GM12878 (cell line): ENCODE measurements at regions of chr5 and their contacts with region 1.

Region 1: DNA sequence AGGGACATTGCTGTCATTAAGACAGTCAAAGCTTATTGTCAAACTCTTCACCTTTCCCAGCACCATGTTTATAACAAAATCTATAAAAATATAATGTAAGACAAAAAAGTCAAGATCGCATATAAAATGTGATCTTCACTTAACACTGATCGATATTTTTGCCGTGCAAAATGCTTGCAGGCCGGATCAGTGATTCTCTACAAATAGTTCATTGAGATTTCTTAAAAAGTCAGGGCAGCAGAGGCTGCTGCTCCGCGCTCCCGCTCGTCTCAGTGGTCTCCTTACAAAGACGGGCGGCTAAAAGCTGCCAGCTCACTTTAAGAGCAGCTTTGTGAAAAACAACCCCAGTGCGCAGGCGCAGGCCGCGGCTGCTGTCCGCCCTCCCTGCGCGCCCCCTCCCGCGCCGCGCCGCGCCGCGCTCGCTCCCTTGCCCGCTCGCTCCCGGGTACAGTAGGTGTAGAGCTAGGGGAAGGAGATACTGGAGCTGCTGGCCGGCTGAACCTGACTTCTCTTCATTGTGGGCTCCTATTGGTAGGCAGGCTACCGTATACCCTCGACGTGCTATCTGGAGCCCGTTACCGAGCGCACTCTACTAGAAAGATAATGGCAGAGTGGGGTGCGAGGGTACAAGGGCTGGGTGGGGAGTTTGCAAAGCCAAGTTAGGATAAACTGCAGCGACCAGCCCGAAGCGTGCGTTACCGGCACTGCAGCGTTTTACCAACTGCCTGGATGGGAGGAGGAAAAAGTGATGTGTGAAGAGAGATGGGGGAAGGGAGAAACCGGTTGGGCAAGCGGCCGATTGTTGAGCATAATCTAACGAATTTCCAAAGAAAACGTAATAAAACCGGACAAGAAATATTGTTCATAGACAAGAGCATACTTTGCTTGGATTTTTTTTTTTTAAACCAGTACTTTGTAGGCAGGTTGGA is at the start of gene ARRDC3:
- DNase-seq: peak; percentile 82
- ATAC-seq: peak; percentile 69
- H3K4me3 ChIP-seq: peak within 1 kb of the TSS; percentile 95
- H3K27ac ChIP-seq: peak within 1 kb of the TSS; percentile 100
- H3K4me1 ChIP-seq: peaks cover 8% of the 10 kb centered on the region; the same call in 1 of the 2 replicates
- H3K27me3 ChIP-seq: no peaks in the 10 kb centered on the region
- CTCF ChIP-seq: no peak
- EP300 ChIP-seq: no peak
- POLR2A ChIP-seq: peak; percentile 98
- RAD21 ChIP-seq: no peak
- polyA plus RNA-seq, gene ARRDC3: 2.3 to 7.0 TPM

Region 2: GRCh38 chr5:89534331-89534730 is 1849.0 kb before region 1 on chr5:
- CTCF ChIA-PET with region 1: no interaction called
- POLR2A ChIA-PET with region 1: no interaction called
- RAD21 ChIA-PET with region 1: no interaction called
- SMC1A ChIA-PET with region 1: no interaction called
- in situ Hi-C with region 1: no loop called
- intact Hi-C with region 1: no loop called
- DNase-seq: no peak
- ATAC-seq: no peak
- H3K4me3 ChIP-seq: no peak overlapping the region
- H3K27ac ChIP-seq: no peak overlapping the region
- H3K4me1 ChIP-seq: no peaks in the 10 kb centered on the region
- H3K27me3 ChIP-seq: no peaks in the 10 kb centered on the region
- CTCF ChIP-seq: no peak
- EP300 ChIP-seq: no peak
- POLR2A ChIP-seq: no peak
- RAD21 ChIP-seq: no peak

Region 3: DNA sequence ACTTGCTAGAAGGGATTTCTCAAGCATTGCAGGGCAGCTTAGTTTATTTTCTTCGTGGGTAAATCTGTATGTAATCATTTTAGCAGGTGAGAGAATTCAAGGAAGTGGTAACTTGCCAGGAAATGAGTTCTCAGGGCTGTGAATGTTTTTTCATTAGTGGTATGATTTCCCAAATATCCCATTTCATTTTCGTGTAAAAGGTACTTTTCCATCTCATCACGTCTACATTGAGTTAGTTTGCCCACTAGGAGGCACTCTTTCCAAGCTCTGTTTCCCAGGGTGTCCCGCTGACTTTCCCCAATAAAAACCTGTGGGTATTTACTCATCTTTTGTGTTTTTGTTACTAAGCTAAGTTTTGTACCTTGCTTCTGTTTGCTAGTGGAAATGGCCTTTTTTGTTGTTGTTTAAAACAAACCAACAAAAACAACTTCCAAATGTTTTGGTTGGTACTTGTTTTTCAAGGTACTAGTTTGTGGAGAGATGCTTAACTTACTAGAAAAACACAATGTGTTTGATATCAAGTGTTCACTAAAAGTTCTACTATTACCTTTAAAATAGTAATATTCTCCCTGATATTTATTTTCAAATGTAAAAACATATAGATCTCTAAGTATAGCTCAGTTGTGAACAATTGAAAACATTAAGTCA is 451.1 kb before region 1 on chr5:
- CTCF ChIA-PET with region 1: interaction called, 117 read pairs
- POLR2A ChIA-PET with region 1: interaction called, 5 read pairs
- RAD21 ChIA-PET with region 1: interaction called, 84 read pairs
- SMC1A ChIA-PET with region 1: interaction called, 92 read pairs
- in situ Hi-C with region 1: loop called (anchors 10 kb)
- intact Hi-C with region 1: loop called (anchors 1 kb)
- DNase-seq: peak; percentile 12
- ATAC-seq: peak; percentile 74
- H3K4me3 ChIP-seq: no peak overlapping the region
- H3K27ac ChIP-seq: no peak overlapping the region
- H3K4me1 ChIP-seq: no peaks in the 10 kb centered on the region
- H3K27me3 ChIP-seq: no peaks in the 10 kb centered on the region
- CTCF ChIP-seq: peak; percentile 69 to 74 (median 71)
- EP300 ChIP-seq: no peak
- POLR2A ChIP-seq: no peak
- RAD21 ChIP-seq: peak; percentile 83

Region 4: DNA sequence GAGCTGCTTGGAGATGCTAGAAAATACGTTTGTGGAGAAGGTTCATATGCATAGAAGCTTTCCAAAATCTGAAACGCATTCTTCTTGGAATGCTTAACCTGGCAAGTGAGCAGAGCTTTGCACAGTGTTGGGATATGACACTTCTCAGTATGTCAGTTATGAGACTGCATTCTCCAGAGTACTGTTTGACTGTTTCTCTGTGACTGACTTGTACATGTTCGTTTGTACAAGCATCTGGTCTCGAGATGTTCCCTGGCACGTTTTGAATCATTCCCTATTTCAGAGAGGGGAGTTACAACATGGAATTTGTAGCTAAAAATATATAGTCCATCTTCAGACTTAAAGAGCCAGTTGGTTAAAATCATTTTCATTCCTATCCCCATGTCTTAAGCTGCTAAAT is 272.6 kb before region 1 on chr5:
- CTCF ChIA-PET with region 1: interaction called, 12 read pairs
- POLR2A ChIA-PET with region 1: interaction called, 4 read pairs
- RAD21 ChIA-PET with region 1: interaction called, 10 read pairs
- SMC1A ChIA-PET with region 1: interaction called, 33 read pairs
- in situ Hi-C with region 1: no loop called
- intact Hi-C with region 1: no loop called
- DNase-seq: no peak
- ATAC-seq: no peak
- H3K4me3 ChIP-seq: no peak overlapping the region
- H3K27ac ChIP-seq: no peak overlapping the region
- H3K4me1 ChIP-seq: no peaks in the 10 kb centered on the region
- H3K27me3 ChIP-seq: no peaks in the 10 kb centered on the region
- CTCF ChIP-seq: no peak
- EP300 ChIP-seq: no peak
- POLR2A ChIP-seq: no peak
- RAD21 ChIP-seq: no peak

Region 5: DNA sequence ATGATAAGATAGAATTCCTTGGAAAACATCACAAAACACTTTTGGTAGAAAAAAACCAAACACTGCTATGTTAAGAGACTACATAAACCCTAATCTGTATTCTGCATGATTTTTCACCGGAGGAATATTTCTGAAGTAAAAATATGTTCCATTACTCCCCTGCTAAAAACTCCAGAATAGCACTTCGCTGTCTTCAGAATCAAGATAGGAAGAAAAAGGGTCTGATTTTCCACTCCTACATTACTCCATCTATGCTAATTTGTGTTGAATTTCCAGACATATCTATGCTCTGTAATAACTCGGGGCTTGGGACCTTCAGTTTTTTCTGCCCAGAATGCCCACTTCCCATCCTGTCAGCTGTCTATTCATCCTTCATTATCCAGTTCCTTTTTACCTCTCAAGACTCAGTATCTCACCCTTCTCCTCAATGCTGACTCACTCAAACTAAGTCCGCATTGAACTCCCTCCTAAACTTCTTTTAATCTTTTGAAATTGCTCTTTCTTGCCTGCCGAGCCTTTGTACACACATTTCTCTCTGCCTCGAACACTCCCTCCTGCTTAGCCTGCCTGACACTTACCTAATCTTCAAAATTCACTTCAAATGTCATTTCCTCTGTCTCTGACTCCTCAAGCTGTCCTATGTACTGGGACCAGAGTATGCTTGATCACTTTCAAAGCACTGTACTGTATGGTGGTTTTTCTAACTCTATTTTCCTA is 171.1 kb before region 1 on chr5:
- CTCF ChIA-PET with region 1: interaction called, 18 read pairs
- POLR2A ChIA-PET with region 1: no interaction called
- RAD21 ChIA-PET with region 1: interaction called, 4 read pairs
- SMC1A ChIA-PET with region 1: interaction called, 11 read pairs
- in situ Hi-C with region 1: no loop called
- intact Hi-C with region 1: no loop called
- DNase-seq: no peak
- ATAC-seq: no peak
- H3K4me3 ChIP-seq: no peak overlapping the region
- H3K27ac ChIP-seq: no peak overlapping the region
- H3K4me1 ChIP-seq: no peaks in the 10 kb centered on the region
- H3K27me3 ChIP-seq: no peaks in the 10 kb centered on the region; a peak in 1 of 4 replicates
- CTCF ChIP-seq: no peak
- EP300 ChIP-seq: no peak
- POLR2A ChIP-seq: no peak
- RAD21 ChIP-seq: no peak

Region 6: GRCh38 chr5:91245871-91246270 is 137.4 kb before region 1 on chr5:
- CTCF ChIA-PET with region 1: interaction called, 37 read pairs
- POLR2A ChIA-PET with region 1: interaction called, 10 read pairs
- RAD21 ChIA-PET with region 1: interaction called, 9 read pairs
- SMC1A ChIA-PET with region 1: interaction called, 29 read pairs
- in situ Hi-C with region 1: no loop called
- intact Hi-C with region 1: no loop called
- DNase-seq: no peak
- ATAC-seq: no peak
- H3K4me3 ChIP-seq: no peak overlapping the region
- H3K27ac ChIP-seq: no peak overlapping the region
- H3K4me1 ChIP-seq: no peaks in the 10 kb centered on the region
- H3K27me3 ChIP-seq: no peaks in the 10 kb centered on the region; a peak in 1 of 4 replicates
- CTCF ChIP-seq: peak in 1 of 3 experiments; percentile 26; a peak in 2 of 6 replicates
- EP300 ChIP-seq: no peak
- POLR2A ChIP-seq: no peak
- RAD21 ChIP-seq: 0 out of 2 replicates have a peak, but pooled peaks have one; percentile 6

Region 7: DNA sequence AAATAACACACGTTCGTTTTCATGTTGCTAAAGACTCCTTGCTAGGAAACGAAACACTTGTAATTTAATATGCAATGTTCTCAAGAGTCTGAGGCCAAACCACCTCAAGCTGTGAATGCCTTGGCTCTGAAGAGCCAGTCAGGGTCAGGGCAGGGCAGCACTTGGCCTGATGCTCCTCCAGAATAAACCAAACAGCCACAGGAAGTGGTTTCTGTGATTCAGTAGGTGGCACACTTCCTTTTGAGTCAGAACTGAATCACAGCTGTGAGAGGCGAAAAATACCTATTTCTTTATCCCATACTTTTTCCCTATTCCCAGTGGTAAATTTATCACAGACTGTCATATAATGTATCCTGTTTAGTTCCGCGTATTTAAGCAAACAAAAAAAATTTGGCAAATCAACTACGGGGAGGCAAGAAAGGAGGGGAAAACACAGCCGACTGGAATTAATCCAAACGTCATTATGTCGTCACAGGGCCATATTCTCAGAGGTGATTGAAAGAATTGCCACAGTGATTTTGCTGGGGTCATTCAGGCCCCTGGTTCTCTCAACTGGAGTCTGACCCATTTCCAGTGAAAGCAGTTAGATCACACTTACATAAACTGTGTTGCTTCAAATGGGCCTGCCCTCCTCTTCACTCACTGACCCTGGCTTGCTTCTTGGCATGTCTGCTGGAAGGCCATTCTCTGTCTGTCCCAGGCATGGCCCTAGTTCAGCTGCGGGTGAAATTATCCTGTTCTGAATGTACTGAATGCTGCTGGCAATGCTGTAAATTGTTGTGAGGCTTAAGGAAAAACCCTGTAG is 71.4 kb before region 1 on chr5:
- CTCF ChIA-PET with region 1: interaction called, 7 read pairs
- POLR2A ChIA-PET with region 1: interaction called, 4 read pairs
- RAD21 ChIA-PET with region 1: interaction called, 3 read pairs
- SMC1A ChIA-PET with region 1: interaction called, 12 read pairs
- in situ Hi-C with region 1: no loop called
- intact Hi-C with region 1: no loop called
- DNase-seq: peak; percentile 71
- ATAC-seq: peak; percentile 96
- H3K4me3 ChIP-seq: no peak overlapping the region
- H3K27ac ChIP-seq: no peak overlapping the region
- H3K4me1 ChIP-seq: peaks cover 17% of the 10 kb centered on the region
- H3K27me3 ChIP-seq: no peaks in the 10 kb centered on the region
- CTCF ChIP-seq: no peak
- EP300 ChIP-seq: peak; percentile 22 to 74; a peak in 2 of 4 replicates
- POLR2A ChIP-seq: no peak
- RAD21 ChIP-seq: no peak